Gastrocnemius medialis (tissue), 4 donors: ENCODE measurements at regions of chr14 and their contacts with region 1.

Region 1: GRCh38 chr14:59189786-59190771 is 1.6 kb downstream of the DAAM1 start:
- DNase-seq: peak; percentile 62 to 67
- ATAC-seq: no peak
- H3K4me3 ChIP-seq: peak overlapping the region; percentile 69 to 98 (median 92)
- H3K27ac ChIP-seq: peak overlapping the region; percentile 82 to 93 (median 89)
- H3K4me1 ChIP-seq: peaks cover 32 to 41% of the 10 kb centered on the region in 2 donors
- H3K27me3 ChIP-seq: no peaks in the 10 kb centered on the region
- CTCF ChIP-seq: no peak
- POLR2A ChIP-seq: no peak

Region 2: DNA sequence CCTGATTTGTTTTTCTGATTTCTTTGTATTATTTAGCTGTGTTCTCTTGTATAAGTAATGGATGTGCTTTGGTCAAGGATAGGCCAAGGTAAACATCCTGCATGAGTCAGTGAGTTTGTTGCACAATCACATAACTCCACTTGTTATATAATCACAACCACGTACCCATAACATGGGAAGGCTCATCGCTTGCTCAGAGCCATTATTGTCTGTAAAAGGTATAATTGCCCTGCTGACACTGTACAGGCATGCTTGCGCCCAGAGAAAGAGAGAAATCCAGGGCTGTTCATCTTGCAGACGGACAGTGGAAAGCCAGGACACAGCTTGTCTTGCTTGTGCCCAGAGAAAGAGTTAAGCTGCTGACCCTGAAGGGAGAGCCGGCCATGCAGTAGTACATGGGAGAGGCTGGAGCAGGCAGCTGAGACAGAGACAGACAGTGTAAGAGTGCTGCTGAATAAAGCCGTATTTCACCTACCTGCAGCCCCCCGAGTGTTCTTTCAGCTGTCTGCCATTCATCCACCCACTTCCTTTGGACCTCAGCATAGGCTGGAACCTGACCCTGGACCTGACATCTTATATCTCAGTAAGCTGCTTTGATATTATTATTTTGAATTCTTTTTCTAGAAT is 176.3 kb before region 1 on chr14:
- in situ Hi-C with region 1: no loop called
- intact Hi-C with region 1: no loop called
- DNase-seq: no peak
- ATAC-seq: no peak
- H3K4me3 ChIP-seq: no peak overlapping the region
- H3K27ac ChIP-seq: no peak overlapping the region
- H3K4me1 ChIP-seq: no peaks in the 10 kb centered on the region
- H3K27me3 ChIP-seq: no peaks in the 10 kb centered on the region
- CTCF ChIP-seq: no peak
- POLR2A ChIP-seq: no peak

Region 3: GRCh38 chr14:59215325-59216181 is 25.5 kb after region 1 on chr14:
- in situ Hi-C with region 1: no loop called
- intact Hi-C with region 1: loop called (anchors 1 kb)
- DNase-seq: peak; percentile 56 to 81
- ATAC-seq: peak; percentile 96 to 97
- H3K4me3 ChIP-seq: no peak overlapping the region
- H3K27ac ChIP-seq: peak overlapping the region; percentile 42 to 66 (median 56)
- H3K4me1 ChIP-seq: peaks cover 44 to 60% of the 10 kb centered on the region in 2 donors
- H3K27me3 ChIP-seq: no peaks in the 10 kb centered on the region
- CTCF ChIP-seq: no peak
- POLR2A ChIP-seq: no peak

Region 4: GRCh38 chr14:59428581-59429012 is 238.5 kb after region 1 on chr14:
- in situ Hi-C with region 1: no loop called
- intact Hi-C with region 1: loop called (anchors 5 kb)
- DNase-seq: no peak
- ATAC-seq: no peak
- H3K4me3 ChIP-seq: no peak overlapping the region
- H3K27ac ChIP-seq: peak overlapping the region in 2 of 4 donors; percentile 39 to 71
- H3K4me1 ChIP-seq: peaks cover 0 to 9% of the 10 kb centered on the region in 2 donors
- H3K27me3 ChIP-seq: no peaks in the 10 kb centered on the region
- CTCF ChIP-seq: peak in 1 of 5 experiments; percentile 21
- POLR2A ChIP-seq: no peak